ENCODE measurements at regions of chr13 and their contacts with region 1.

Region 1: DNA sequence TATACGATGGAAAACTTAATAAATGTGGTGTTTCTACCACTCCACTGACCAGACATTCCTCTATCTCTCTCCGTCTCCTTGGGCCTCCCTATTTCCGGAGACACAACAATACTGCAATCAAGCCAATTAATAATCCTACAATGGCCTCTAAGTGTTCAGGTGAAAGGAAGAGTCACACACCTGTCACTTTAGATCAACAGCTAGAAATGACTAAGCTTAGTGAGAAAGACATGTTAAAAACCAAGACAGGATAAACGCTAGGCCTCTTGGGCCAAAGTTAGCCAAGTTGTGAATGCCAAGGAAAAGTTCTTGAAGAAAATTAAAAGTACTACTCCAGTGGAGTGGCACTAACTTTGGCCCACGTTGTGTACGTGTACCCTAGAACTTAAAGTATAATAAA is 22.5 kb downstream of the ZDHHC20 start:
- DNase-seq: no peak
- CTCF ChIP-seq: no peak

Region 2: DNA sequence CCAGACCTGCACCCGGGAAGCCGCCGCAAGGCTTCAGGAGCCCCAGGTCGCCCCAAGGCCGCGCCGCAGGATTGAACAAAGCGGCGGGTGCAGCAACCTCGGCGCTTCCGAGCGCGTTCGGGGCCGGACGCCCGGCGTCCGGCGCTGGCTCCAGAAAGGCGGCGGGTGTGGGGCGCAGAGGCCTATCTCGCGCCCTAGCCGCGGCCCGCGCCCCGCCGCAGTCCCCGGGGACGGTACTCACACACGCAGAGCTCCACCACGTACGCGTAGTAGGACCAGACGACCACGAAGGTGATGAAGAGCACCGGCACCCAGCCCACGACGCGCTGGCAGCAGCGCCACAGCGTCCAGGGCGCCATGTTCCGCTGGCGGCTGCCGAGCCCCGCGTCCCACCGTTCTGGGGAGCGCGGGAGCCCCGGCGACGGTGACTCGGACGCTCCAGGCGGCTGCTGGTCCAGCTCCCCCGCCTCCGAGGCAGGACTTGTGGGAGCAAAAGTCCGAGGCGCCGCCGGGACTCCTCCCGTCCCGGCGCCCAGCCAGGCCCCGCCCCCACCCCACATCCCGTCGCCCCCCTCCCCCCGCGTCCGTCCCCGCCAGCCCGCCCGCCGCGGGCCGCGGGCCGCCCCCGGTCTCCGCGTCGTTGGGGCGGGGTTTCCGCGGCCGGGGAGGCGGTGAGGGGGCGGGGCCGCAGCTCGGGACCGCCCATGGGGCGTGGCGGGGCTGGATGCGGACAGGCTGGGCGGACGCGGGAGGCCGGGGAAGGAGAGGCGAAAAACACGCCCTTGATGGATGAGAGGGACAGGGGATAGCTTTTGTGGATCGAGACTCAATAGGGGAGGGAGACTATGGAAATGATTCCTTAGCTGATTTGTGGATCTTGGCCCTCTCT is 22.5 kb after region 1 on chr13 and contains the start of gene ZDHHC20:
- CTCF ChIA-PET with region 1: interaction called, 12 read pairs
- POLR2A ChIA-PET with region 1: no interaction called
- DNase-seq: peak; percentile 98
- CTCF ChIP-seq: no peak

Region 3: DNA sequence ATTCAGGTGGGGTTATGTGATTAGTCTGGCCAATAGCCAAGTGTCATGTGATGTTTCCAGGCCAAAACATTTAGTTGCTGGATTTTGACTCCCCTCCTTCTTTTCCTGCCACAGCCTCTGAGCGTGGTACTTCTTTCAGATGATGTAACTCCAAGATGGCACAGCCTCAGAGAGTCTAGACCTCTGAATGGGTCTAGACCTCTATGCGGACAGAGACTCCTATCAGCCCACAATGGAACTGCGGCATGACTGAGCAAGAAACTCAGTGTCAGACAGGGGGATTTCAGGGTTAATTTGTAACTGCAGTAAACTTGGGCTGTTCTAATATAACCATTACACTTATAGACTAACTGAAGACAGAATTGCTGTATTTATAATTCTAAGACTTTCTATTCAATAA is 65.1 kb after region 1 on chr13:
- CTCF ChIA-PET with region 1: no interaction called
- POLR2A ChIA-PET with region 1: no interaction called
- DNase-seq: no peak
- CTCF ChIP-seq: no peak

Region 4: DNA sequence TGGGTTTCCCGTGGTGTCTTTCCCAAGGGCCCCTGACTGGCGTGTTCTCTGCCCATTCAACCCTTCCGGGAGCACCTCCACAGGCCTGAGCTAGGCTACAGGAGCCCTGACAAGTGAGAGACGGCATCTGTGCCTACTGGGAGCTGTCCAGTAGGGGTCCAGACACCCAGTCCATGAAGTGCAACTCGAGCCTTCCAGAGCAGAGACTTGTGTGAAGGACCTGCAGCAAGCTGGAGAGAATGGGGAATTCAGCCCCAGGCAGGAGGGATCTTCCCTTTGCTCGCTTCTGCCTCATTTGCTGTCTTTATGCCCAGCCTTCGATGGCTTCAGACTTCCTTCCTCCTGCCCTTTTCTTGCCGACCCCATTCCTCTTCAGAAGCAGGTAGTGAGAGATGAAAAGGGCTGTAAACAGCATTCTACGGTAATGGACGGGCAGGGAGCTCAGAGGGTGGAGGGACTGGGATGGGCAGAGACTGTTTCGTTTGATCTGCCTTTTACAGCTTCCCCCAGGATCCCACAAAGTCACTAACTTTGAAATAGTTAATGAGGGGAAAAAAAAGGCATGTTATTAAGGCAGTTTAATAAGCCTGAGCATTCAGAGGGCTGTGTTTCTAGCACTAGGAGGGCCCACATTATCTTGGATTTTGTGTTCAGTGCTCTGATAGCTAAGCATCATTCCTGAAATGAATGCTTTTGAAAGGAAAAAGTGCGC is 561.9 kb after region 1 on chr13:
- CTCF ChIA-PET with region 1: no interaction called
- POLR2A ChIA-PET with region 1: no interaction called
- DNase-seq: no peak
- CTCF ChIP-seq: no peak